Heart left ventricle (tissue), 16 donors: ENCODE measurements at regions of chr6 and their contacts with region 1.

Region 1: GRCh38 chr6:134347916-134348805 is 30.2 kb upstream of the SGK1 start:
- DNase-seq: peak in 4 of 5 donors; percentile 25 to 64 (median 38)
- ATAC-seq: peak in 3 of 4 donors; percentile 23 to 81 (median 81)
- H3K4me3 ChIP-seq: no peak overlapping the region
- H3K27ac ChIP-seq: peak overlapping the region in 5 of 12 donors; percentile 5 to 69 (median 32)
- H3K4me1 ChIP-seq: peaks cover 0 to 44% (median 14%) of the 10 kb centered on the region in 12 donors
- H3K27me3 ChIP-seq: no peaks in the 10 kb centered on the region
- CTCF ChIP-seq: no peak
- POLR2A ChIP-seq: no peak

Region 2: DNA sequence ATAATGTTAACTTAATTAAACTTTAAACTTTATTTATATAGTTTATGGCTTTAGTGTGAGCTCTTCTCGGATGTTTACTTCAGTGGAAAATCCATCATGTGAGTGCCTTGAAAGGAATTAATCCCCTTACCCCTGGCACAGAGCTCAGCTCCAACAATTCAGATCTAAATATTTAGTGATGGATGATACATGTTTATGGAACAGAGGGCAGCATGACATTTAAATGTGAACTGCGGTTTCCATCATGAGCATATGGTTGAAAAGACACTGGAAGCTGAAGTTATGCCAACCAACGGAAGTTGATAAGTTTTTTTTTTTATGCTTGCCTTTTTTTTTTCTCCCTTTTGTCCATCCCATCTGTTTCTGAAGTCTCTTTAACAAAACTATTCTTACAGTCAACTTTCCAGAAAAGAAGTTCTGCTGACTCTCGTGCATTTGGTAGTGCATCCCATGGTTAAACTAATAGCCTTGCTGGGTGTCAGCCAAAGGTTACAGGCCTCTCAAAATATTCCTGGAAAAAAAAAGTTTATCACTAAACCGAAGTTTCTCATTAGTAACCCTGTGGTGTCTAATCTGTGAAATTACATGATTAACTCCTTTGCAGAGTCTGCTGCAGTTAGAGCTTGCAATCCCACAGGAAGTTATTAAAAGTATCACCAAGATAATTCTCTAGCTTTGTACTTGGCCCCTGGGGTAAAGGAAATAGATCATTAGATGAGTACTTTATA is 703.1 kb before region 1 on chr6:
- intact Hi-C with region 1: no loop called
- DNase-seq: peak in 2 of 5 donors; percentile 16 to 24
- ATAC-seq: peak in 2 of 4 donors; percentile 43 to 59
- H3K4me3 ChIP-seq: no peak overlapping the region
- H3K27ac ChIP-seq: peak overlapping the region in 2 of 12 donors; percentile 25 to 26
- H3K4me1 ChIP-seq: peaks cover 0 to 9% (median 0%) of the 10 kb centered on the region in 12 donors
- H3K27me3 ChIP-seq: no peaks in the 10 kb centered on the region
- CTCF ChIP-seq: no peak
- POLR2A ChIP-seq: no peak

Region 3: GRCh38 chr6:134223796-134224420 is 124.3 kb before region 1 on chr6:
- intact Hi-C with region 1: no loop called
- DNase-seq: no peak
- ATAC-seq: no peak
- H3K4me3 ChIP-seq: no peak overlapping the region
- H3K27ac ChIP-seq: no peak overlapping the region
- H3K4me1 ChIP-seq: peaks cover 0 to 6% (median 0%) of the 10 kb centered on the region in 12 donors
- H3K27me3 ChIP-seq: no peaks in the 10 kb centered on the region
- CTCF ChIP-seq: no peak
- POLR2A ChIP-seq: no peak

Region 4: GRCh38 chr6:134235937-134236751 is 112.0 kb before region 1 on chr6:
- intact Hi-C with region 1: loop called in 1 of 10 experiments (anchors 10 kb)
- DNase-seq: no peak
- ATAC-seq: peak in 2 of 4 donors; percentile 22 to 55
- H3K4me3 ChIP-seq: no peak overlapping the region
- H3K27ac ChIP-seq: peak overlapping the region in 1 of 12 donors; percentile 77
- H3K4me1 ChIP-seq: peaks cover 0 to 58% (median 15%) of the 10 kb centered on the region in 12 donors
- H3K27me3 ChIP-seq: no peaks in the 10 kb centered on the region
- CTCF ChIP-seq: no peak
- POLR2A ChIP-seq: no peak

Region 5: DNA sequence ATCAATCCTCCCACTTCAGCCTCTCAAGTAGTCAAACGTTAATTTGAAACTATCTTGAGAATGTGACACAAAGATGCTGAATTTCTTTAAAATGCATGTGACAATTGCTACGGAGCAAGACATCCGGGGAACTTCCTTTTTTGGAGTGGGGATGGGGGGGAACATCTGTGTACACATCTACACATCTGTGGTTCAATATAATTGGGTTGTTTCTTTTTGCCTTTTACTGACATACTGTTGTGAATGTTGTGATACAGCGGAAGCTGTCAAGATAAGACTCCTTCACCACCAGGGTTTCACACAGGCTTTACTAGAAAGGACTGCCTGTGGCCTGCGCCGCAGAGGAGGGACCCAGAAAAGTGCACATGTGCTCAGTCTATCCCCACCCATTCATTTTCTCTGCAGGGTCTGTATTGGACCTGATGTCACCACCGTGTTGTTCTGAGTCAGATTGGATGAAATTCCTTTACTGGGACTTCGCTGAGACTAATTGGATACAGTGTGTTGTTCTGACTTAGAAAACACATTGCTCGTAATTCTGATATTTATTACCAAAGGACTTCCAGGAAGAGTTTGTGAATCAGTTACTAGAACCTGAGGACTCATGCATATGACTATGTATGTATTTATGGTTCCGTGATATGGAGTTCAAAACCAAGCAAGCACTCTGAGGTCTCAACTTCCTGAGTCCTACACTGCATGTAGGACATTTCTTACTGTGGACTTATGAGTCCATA is 68.4 kb after region 1 on chr6:
- intact Hi-C with region 1: loop called in 3 of 10 experiments (anchors 5 to 10 kb)
- DNase-seq: no peak
- ATAC-seq: no peak
- H3K4me3 ChIP-seq: no peak overlapping the region
- H3K27ac ChIP-seq: peak overlapping the region in 2 of 12 donors; percentile 38 to 78
- H3K4me1 ChIP-seq: peaks cover 0 to 41% (median 2%) of the 10 kb centered on the region in 12 donors
- H3K27me3 ChIP-seq: no peaks in the 10 kb centered on the region
- CTCF ChIP-seq: no peak
- POLR2A ChIP-seq: no peak

Region 6: DNA sequence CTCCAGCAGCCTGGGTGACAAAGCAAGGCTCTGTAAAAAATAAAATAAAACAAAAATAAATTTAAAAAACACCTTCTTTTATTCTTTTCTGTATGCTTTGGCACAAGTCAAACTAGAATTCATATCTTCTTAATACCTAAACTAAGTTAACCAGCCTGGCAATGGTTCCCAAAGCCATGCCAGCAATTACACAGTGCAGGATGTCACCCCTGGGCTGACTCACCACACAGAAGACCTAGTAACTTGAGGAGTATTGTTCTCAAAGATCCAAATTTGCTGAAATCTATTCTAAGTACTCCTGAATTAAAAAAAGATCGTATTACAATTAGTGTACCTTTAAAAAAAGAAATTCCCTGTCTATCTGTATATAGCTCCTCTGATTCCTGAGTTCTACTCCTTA is 132.4 kb after region 1 on chr6:
- intact Hi-C with region 1: loop called in 1 of 10 experiments (anchors 10 kb)
- DNase-seq: peak in 1 of 5 donors; percentile 48
- ATAC-seq: peak in 2 of 4 donors; percentile 50 to 58
- H3K4me3 ChIP-seq: no peak overlapping the region
- H3K27ac ChIP-seq: peak overlapping the region in 1 of 12 donors; percentile 11
- H3K4me1 ChIP-seq: peaks cover 2 to 22% (median 14%) of the 10 kb centered on the region in 12 donors
- H3K27me3 ChIP-seq: no peaks in the 10 kb centered on the region
- CTCF ChIP-seq: no peak
- POLR2A ChIP-seq: no peak

Region 7: GRCh38 chr6:134517145-134517658 is 169.0 kb after region 1 on chr6:
- intact Hi-C with region 1: loop called in 2 of 10 experiments (anchors 5 to 10 kb)
- DNase-seq: peak; percentile 79 to 92 (median 80)
- ATAC-seq: peak; percentile 89 to 96 (median 94)
- H3K4me3 ChIP-seq: peak overlapping the region in 6 of 12 donors; percentile 2 to 23 (median 10)
- H3K27ac ChIP-seq: peak overlapping the region; percentile 43 to 83 (median 73)
- H3K4me1 ChIP-seq: peaks cover 6 to 55% (median 30%) of the 10 kb centered on the region in 12 donors
- H3K27me3 ChIP-seq: no peaks in the 10 kb centered on the region
- CTCF ChIP-seq: no peak
- POLR2A ChIP-seq: no peak

Region 8: GRCh38 chr6:134537146-134537555 is 189.0 kb after region 1 on chr6:
- intact Hi-C with region 1: loop called in 2 of 10 experiments (anchors 10 kb)
- DNase-seq: no peak
- ATAC-seq: no peak
- H3K4me3 ChIP-seq: no peak overlapping the region
- H3K27ac ChIP-seq: no peak overlapping the region
- H3K4me1 ChIP-seq: peaks cover 3 to 38% (median 14%) of the 10 kb centered on the region in 12 donors
- H3K27me3 ChIP-seq: no peaks in the 10 kb centered on the region
- CTCF ChIP-seq: no peak
- POLR2A ChIP-seq: no peak

Region 9: DNA sequence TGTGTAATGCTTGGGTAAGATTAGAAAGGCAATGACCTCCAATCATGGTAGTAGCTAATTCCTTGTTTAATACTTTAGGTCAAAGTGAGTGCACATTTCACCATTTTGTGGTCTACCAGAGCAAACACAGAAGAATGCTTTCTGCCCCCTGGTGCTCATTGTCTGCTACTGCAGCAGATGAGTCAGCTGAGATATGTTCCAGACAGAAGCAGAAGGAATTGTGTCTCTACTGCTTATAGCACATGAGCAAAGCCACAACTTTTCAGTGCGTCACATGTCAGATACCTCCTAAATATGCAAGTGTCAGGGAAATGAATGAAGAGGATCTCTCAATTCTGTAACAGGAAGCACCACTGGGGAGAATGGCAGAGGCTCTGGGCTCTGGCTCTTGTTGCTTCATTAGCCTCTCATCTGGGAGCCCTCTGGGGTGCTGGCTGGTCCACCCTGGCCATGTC is 292.8 kb after region 1 on chr6:
- intact Hi-C with region 1: loop called in 2 of 10 experiments (anchors 5 to 10 kb)
- DNase-seq: peak; percentile 67 to 78 (median 77)
- ATAC-seq: peak; percentile 85 to 92 (median 89)
- H3K4me3 ChIP-seq: no peak overlapping the region
- H3K27ac ChIP-seq: peak overlapping the region in 3 of 12 donors; percentile 9 to 53 (median 36)
- H3K4me1 ChIP-seq: peaks cover 0 to 27% (median 6%) of the 10 kb centered on the region in 12 donors
- H3K27me3 ChIP-seq: no peaks in the 10 kb centered on the region
- CTCF ChIP-seq: peak; percentile 89 to 99 (median 94)
- POLR2A ChIP-seq: no peak